Activated CD8-positive, alpha-beta T cell treated with anti-CD3 and anti-CD28 coated beads, Interleukin-2, amount 10 ng/mL, durations not matched to agents 7 days and 5 days (primary cell): ENCODE measurements at regions of chr1 and their contacts with region 1.

Region 1: DNA sequence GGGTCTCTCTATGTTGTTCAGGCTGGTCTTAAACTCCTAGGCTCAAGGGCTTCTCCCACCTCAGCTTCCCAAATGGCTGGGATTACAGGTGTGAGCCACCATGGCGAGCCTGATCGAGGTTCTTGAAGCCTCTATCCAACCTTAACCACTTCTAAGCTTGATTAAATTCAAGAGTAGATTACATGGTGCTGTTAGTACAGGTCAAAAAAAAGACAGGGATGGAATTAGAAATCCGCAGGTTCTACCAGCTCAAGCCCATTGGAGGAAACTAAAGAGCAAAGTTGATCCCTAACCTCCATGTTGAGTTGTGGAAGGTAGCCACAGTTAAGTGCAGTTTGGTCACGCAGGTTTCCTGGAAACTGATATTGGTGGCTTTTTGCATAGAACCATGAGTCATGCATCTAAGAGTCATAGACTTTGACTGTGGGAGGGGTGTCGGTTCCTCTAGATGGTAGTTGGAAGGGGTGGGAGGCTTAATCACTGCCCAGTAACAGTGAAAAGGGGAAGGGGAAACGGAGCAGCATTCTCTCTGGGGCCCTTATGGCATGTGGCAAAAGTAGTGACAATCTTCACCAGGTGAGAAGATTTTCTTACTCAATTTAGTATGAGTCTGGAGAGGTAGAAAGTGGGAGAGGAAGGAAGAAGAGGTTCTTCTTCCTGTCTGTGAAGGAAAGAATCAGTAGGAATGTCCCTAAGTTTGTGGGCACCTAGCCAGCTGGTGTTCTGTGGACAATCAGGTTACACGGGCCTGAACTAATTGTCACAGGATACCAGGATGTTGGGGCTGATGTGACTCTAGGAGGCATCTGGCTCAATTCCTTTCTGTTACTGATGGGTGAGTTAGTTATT is 7.0 kb downstream of the CD53 start:
- DNase-seq: peak; percentile 84
- ATAC-seq: peak; percentile 57
- H3K4me3 Mint-ChIP-seq: peak overlapping the region; percentile 79
- H3K27ac Mint-ChIP-seq: peak overlapping the region; percentile 100
- H3K4me1 Mint-ChIP-seq: peaks cover 74% of the 10 kb centered on the region
- H3K27me3 Mint-ChIP-seq: no peaks in the 10 kb centered on the region

Region 2: GRCh38 chr1:110798691-110799256 is 81.2 kb before region 1 on chr1:
- CTCF ChIA-PET with region 1: no interaction called
- POLR2A ChIA-PET with region 1: no interaction called
- DNase-seq: no peak
- ATAC-seq: no peak
- H3K4me3 Mint-ChIP-seq: no peak overlapping the region
- H3K27ac Mint-ChIP-seq: no peak overlapping the region
- H3K4me1 Mint-ChIP-seq: peaks cover under 1% of the 10 kb centered on the region
- H3K27me3 Mint-ChIP-seq: peaks cover 2% of the 10 kb centered on the region

Region 3: DNA sequence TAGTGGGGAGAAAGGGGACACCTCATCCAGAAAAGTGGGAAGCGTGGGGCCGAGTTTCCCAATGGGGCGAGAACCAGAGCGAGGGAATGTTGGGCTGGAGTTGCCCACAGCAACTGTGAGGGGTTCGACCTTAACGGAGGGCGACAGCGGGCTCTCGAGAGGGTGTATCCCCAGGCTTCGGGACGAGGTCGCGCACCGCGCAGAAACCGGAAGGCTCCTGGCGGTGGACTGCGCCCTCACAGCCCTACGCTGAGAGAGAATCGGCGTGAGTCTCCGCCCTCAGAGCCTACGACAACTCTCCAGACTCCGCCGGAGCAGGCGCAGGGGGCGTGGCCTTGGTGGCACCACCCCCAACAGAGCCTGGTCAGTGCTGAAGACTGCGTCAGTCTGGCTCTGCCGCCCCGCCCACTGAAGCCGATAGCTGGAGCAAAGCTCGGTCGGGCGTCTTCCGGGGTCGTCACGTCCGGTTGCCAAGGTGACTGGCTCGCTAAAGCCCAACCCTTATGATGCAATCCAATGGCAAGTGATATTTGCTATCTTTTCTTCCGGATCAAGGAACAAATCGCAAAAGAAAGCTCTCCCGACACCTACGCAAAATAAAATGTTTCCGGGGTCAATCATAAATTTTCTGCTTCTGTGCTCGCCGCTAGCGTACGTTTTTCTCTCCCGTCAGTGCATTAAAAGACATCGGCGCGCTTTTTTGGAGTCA is 83.9 kb after region 1 on chr1 and contains the start of gene LRIF1:
- CTCF ChIA-PET with region 1: interaction called, 9 read pairs
- POLR2A ChIA-PET with region 1: interaction called, 22 read pairs
- DNase-seq: peak; percentile 100
- ATAC-seq: peak; percentile 99
- H3K4me3 Mint-ChIP-seq: peak within 1 kb of the TSS; percentile 78
- H3K27ac Mint-ChIP-seq: peak within 1 kb of the TSS; percentile 99
- H3K4me1 Mint-ChIP-seq: peaks cover 39% of the 10 kb centered on the region
- H3K27me3 Mint-ChIP-seq: peaks cover 8% of the 10 kb centered on the region
- total RNA-seq, gene LRIF1: 19.6 to 20.9 TPM

Region 4: GRCh38 chr1:111030590-111030989 is 150.6 kb after region 1 on chr1:
- CTCF ChIA-PET with region 1: no interaction called
- POLR2A ChIA-PET with region 1: no interaction called
- DNase-seq: peak; percentile 76
- ATAC-seq: peak; percentile 70
- H3K4me3 Mint-ChIP-seq: no peak overlapping the region
- H3K27ac Mint-ChIP-seq: no peak overlapping the region
- H3K4me1 Mint-ChIP-seq: no peaks in the 10 kb centered on the region
- H3K27me3 Mint-ChIP-seq: peaks cover 24% of the 10 kb centered on the region